Activated CD4-positive, alpha-beta T cell treated with anti-CD3 and anti-CD28 coated beads for 36 hours (primary cell): ENCODE measurements at regions of chr10 and their contacts with region 1.

Region 1: GRCh38 chr10:7260412-7260900 is 150.4 kb downstream of the SFMBT2 start:
- DNase-seq: no peak
- ATAC-seq: peak; percentile 11
- H3K4me3 Mint-ChIP-seq: no peak overlapping the region
- H3K27ac Mint-ChIP-seq: peak overlapping the region; percentile 16
- H3K4me1 Mint-ChIP-seq: peaks cover 58% of the 10 kb centered on the region
- H3K27me3 Mint-ChIP-seq: no peaks in the 10 kb centered on the region

Region 2: DNA sequence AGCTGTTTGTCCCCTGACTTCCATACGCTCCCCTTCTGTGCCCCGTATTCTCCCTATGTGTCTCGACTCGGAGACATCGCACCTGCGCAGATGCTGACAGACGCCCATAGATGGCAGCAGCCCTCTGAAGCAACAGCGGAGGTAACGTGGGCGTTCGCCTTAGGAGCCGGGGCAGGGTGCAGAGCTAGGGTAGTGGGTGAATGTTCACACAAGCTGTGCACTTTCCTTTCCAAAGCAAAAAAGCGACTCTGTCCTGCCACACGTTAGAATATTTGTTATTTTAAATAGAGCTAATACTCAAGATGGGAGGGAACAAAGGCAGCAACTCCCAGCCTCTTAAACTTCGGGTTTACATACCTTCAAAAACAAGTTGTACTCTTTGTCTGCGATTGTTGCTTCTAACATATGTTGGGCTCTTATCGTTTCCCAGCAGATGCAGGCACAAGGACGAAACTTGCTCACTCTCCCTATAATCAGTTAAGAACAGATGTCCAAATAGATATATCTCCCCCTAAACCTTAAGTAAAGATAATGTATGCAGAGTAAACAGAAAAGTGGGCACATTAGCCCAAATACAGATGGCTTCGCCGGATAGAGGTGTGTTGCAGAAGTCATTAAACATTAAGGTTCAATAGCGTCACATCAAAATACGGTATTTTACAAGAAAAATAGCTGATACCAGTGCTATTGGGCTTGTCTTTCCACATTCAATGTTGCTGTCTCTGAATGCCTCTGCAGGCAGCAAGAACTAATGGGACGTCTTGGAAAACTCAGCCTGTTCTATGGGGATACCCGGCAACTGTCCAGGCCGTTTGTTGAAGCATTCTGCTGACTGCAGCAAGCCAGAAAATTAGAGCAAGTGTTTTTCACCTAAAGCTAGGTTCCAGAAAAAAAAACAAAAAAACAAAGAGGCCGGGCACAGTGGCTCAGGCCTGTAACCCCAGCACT is 340.1 kb before region 1 on chr10:
- CTCF ChIA-PET with region 1: no interaction called
- POLR2A ChIA-PET with region 1: no interaction called
- intact Hi-C with region 1: loop called (anchors 5 to 10 kb)
- DNase-seq: peak; percentile 90
- ATAC-seq: peak; percentile 99
- H3K4me3 Mint-ChIP-seq: no peak overlapping the region
- H3K27ac Mint-ChIP-seq: no peak overlapping the region
- H3K4me1 Mint-ChIP-seq: peaks cover 15% of the 10 kb centered on the region
- H3K27me3 Mint-ChIP-seq: peaks cover 2% of the 10 kb centered on the region

Region 3: DNA sequence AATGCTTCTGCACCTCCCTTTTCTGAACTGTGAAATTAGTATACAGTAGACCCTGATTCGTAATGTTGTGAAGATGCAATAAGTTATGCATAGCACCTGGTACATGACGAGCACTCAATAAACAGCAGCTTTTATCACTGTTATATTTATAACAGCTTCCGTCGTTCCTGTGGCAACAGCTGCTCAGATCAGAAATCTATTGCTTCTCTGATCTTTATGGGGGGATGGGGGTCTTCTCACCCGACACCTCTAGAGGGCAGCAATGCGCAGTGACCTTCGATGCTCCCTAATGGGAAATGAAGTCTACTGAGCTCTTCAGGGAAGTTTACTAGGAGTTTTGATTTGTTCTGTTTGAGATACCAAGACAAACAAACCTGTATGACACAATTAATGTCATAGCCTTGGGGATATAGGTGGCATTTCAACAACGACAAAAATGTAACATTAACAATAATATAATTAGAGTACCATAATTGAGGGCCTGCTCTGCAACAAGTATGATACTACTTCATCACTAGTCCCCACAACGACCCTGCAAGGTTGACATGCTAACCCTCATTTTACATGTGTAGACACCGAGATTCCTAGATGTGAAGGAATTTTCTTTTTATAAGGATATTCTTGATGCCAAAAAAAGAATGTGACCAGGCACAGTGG is 139.2 kb before region 1 on chr10:
- CTCF ChIA-PET with region 1: no interaction called
- POLR2A ChIA-PET with region 1: no interaction called
- intact Hi-C with region 1: loop called in 1 of 2 experiments (anchors 10 kb)
- DNase-seq: peak; percentile 83
- ATAC-seq: peak; percentile 91
- H3K4me3 Mint-ChIP-seq: no peak overlapping the region
- H3K27ac Mint-ChIP-seq: no peak overlapping the region
- H3K4me1 Mint-ChIP-seq: peaks cover 5% of the 10 kb centered on the region
- H3K27me3 Mint-ChIP-seq: peaks cover 2% of the 10 kb centered on the region

Region 4: GRCh38 chr10:7192831-7193361 is 67.6 kb before region 1 on chr10:
- CTCF ChIA-PET with region 1: no interaction called
- POLR2A ChIA-PET with region 1: interaction called, 4 read pairs
- intact Hi-C with region 1: loop called (anchors 2 to 5 kb)
- DNase-seq: peak; percentile 77
- ATAC-seq: peak; percentile 80
- H3K4me3 Mint-ChIP-seq: peak overlapping the region; percentile 46
- H3K27ac Mint-ChIP-seq: peak overlapping the region; percentile 94
- H3K4me1 Mint-ChIP-seq: peaks cover 74% of the 10 kb centered on the region
- H3K27me3 Mint-ChIP-seq: no peaks in the 10 kb centered on the region

Region 5: GRCh38 chr10:7250236-7250635 is 10.2 kb before region 1 on chr10:
- CTCF ChIA-PET with region 1: no interaction called
- POLR2A ChIA-PET with region 1: no interaction called
- intact Hi-C with region 1: no loop called
- DNase-seq: no peak
- ATAC-seq: no peak
- H3K4me3 Mint-ChIP-seq: no peak overlapping the region
- H3K27ac Mint-ChIP-seq: no peak overlapping the region
- H3K4me1 Mint-ChIP-seq: peaks cover 22% of the 10 kb centered on the region
- H3K27me3 Mint-ChIP-seq: no peaks in the 10 kb centered on the region

Region 6: DNA sequence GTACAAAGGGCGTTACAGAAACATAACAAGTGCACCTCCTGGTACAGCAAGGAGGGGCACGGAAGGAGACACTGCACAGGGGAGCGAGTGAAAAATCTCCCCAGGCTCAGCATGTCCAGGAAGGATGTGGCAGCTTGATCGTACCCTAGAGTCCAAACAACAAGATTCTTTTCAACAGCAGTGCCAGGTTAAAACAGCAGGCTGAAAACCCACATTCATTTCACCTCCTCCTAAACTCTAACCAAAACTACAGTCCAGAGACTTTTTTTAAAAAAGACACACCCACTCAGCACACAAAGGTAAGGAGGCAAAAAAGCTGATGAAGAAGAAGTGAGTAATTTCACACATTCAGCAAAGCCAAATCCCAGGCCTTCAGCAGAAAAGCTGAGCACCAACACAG is 11.6 kb after region 1 on chr10:
- CTCF ChIA-PET with region 1: interaction called, 14 read pairs
- POLR2A ChIA-PET with region 1: interaction called, 7 read pairs
- intact Hi-C with region 1: loop called (anchors 1 kb)
- DNase-seq: peak; percentile 23
- ATAC-seq: peak; percentile 37
- H3K4me3 Mint-ChIP-seq: peak overlapping the region; percentile 24
- H3K27ac Mint-ChIP-seq: peak overlapping the region; percentile 84
- H3K4me1 Mint-ChIP-seq: peaks cover 81% of the 10 kb centered on the region
- H3K27me3 Mint-ChIP-seq: no peaks in the 10 kb centered on the region